H1 (cell line): ENCODE measurements at regions of chr1 and their contacts with region 1.

Region 1: GRCh38 chr1:62131093-62131725 is 63.4 kb upstream of the L1TD1 start:
- DNase-seq: peak in 1 of 2 experiments; percentile 63
- H3K4me3 ChIP-seq: no peak overlapping the region
- H3K27ac ChIP-seq: no peak overlapping the region
- H3K4me1 ChIP-seq: no peaks in the 10 kb centered on the region
- H3K27me3 ChIP-seq: no peaks in the 10 kb centered on the region
- CTCF ChIP-seq: peak; percentile 60 to 98 (median 76)
- EP300 ChIP-seq: no peak
- POLR2A ChIP-seq: no peak
- RAD21 ChIP-seq: peak; percentile 82 to 83

Region 2: DNA sequence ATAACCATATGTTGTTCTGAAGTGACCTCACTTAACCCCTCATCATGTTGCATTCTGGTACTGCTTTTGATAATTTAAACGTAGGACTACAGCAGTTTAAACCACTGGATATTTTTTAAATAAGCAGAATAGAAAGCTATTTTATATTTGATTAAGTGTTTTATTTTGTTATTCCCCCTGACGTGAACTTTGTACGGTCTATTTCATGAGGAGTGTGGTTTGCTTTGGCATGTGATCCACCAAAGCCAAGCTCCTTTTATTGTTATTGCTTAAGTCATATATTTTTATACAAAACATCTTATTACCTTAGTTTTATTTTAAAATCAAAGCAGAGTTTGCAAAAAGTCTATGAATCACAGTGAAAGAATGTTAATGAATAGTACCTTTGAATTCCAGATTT is 37.9 kb before region 1 on chr1:
- CTCF ChIA-PET with region 1: interaction called, 12 read pairs
- POLR2A ChIA-PET with region 1: interaction called, 5 read pairs
- DNase-seq: no peak
- H3K4me3 ChIP-seq: no peak overlapping the region
- H3K27ac ChIP-seq: no peak overlapping the region
- H3K4me1 ChIP-seq: no peaks in the 10 kb centered on the region
- H3K27me3 ChIP-seq: no peaks in the 10 kb centered on the region
- CTCF ChIP-seq: no peak
- EP300 ChIP-seq: no peak
- POLR2A ChIP-seq: no peak
- RAD21 ChIP-seq: no peak

Region 3: DNA sequence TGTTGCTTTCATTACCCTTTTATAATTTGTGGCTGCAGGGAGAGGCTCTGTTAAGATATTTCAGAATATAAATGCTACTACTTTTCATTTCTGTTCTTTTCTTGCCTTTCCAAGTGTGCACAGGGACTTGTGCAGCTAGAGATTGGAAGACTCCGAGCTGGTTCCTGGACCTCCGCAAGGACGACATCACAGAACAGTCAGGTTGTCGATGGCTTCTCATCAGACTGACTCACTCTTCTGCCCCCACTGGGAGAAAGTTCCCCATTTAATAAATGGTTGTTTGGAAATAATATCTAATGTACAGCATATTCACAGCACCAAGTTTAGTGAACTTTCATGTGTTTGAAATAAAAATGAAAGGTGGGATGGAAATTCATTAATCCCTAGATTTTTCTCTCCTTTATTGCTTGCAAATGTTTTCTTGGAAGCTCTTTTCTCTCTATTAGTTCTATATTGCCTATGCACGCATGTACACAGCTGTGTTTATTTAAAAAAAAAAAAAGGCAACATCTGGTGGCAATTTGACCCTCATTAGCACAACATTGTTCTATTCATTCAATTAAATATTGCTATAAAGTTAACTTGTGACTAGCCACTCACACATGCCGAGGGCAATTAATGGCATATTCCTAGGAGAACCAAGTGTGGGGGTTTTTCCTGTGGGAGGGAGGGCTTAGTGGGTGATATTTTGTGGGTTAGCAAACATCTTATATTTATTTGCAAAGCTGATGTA is 14.0 kb before region 1 on chr1:
- CTCF ChIA-PET with region 1: interaction called, 52 read pairs
- POLR2A ChIA-PET with region 1: interaction called, 4 read pairs
- DNase-seq: no peak
- H3K4me3 ChIP-seq: no peak overlapping the region
- H3K27ac ChIP-seq: no peak overlapping the region
- H3K4me1 ChIP-seq: no peaks in the 10 kb centered on the region
- H3K27me3 ChIP-seq: no peaks in the 10 kb centered on the region
- CTCF ChIP-seq: no peak
- EP300 ChIP-seq: no peak
- POLR2A ChIP-seq: no peak
- RAD21 ChIP-seq: no peak